Left lung (tissue), 14 donors: ENCODE measurements at regions of chr18 and their contacts with region 1.

Region 1: DNA sequence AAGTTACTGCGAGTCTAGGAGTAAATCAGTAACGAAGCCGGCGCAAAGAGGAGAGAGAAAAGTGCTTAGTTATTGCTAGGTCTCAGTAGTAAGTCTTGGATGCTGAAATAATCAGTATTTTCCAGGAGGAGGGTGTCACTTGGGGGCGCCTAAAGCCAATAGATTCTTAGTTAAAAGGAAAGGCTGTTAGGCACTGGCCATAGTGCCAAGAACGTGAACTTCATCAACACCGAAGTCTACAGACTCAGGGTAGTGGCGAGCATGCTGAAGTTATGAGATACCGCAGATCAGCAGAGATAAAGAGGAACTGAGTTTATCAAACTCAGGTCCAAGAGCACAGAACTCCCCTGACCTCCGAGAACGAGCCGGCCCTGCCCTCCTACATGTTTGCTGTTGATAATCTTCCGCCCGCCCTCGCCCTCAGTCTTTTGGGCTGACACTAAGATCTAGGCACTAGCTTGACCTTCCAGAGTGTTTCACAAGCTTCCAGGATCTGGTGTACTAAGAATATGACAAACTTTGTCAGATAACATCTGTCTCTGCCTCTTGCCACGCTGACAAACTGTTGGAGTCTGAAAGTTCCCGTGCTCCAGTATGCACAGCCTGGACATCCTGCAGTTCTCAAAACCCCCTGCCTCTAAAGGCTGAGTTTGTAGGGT is 49.2 kb downstream of the CYB5A start:
- DNase-seq: peak in 1 of 4 donors; percentile 31
- ATAC-seq: peak; percentile 68
- H3K4me3 ChIP-seq: no peak overlapping the region
- H3K27ac ChIP-seq: peak overlapping the region in 1 of 2 donors; percentile 11
- H3K4me1 ChIP-seq: peaks cover 0 to 1% of the 10 kb centered on the region in 2 donors
- H3K27me3 ChIP-seq: no peaks in the 10 kb centered on the region
- CTCF ChIP-seq: no peak

Region 2: GRCh38 chr18:74331404-74331803 is 88.8 kb after region 1 on chr18:
- intact Hi-C with region 1: loop called in 1 of 2 experiments (anchors 10 kb)
- DNase-seq: peak in 1 of 4 donors; percentile 22
- ATAC-seq: peak; percentile 59
- H3K4me3 ChIP-seq: no peak overlapping the region
- H3K27ac ChIP-seq: no peak overlapping the region
- H3K4me1 ChIP-seq: no peaks in the 10 kb centered on the region
- H3K27me3 ChIP-seq: no peaks in the 10 kb centered on the region
- CTCF ChIP-seq: peak in 1 of 2 donors; percentile 26